MCF 10A (cell line): ENCODE measurements at regions of chr2 and their contacts with region 1.

Region 1: DNA sequence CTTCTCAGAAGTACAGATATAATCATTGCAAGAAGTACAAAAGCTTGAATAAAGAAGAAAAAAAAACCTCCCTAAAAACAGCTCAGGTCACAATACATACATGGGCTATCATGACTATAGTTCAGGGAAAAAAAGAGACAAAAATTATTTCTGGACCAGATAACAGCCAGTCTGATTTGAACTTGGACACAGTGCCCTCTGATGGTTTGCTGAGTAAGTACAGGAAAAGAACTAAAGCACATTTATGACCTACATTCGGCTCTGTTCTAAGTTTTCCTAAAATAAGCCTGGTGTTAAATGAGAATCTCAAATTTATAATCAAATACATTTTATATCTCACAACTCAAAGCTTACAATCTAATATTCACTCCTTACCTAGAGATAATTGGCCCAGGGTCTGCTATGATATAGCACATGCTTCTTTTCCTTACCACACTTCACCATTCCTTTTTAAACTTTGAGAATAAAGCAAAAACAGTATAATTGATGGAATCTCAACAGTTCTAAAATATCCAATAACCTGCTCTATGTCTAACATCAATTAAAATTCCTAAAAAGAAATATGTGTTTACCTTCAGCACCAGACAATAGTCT is 81.1 kb downstream of the RAPH1 start:
- DNase-seq: peak; percentile 60
- H3K4me3 Mint-ChIP-seq: no peak overlapping the region
- H3K27ac Mint-ChIP-seq: no peak overlapping the region
- H3K4me1 Mint-ChIP-seq: peaks cover 14% of the 10 kb centered on the region
- H3K27me3 Mint-ChIP-seq: no peaks in the 10 kb centered on the region
- CTCF ChIP-seq: peak; percentile 62

Region 2: GRCh38 chr2:203225423-203226039 is 228.4 kb before region 1 on chr2:
- CTCF ChIA-PET with region 1: interaction called, 17 read pairs
- POLR2A ChIA-PET with region 1: interaction called, 3 read pairs
- intact Hi-C with region 1: loop called (anchors 1 kb)
- DNase-seq: peak; percentile 41
- H3K4me3 Mint-ChIP-seq: no peak overlapping the region
- H3K27ac Mint-ChIP-seq: no peak overlapping the region
- H3K4me1 Mint-ChIP-seq: no peaks in the 10 kb centered on the region
- H3K27me3 Mint-ChIP-seq: no peaks in the 10 kb centered on the region
- CTCF ChIP-seq: peak; percentile 83

Region 3: DNA sequence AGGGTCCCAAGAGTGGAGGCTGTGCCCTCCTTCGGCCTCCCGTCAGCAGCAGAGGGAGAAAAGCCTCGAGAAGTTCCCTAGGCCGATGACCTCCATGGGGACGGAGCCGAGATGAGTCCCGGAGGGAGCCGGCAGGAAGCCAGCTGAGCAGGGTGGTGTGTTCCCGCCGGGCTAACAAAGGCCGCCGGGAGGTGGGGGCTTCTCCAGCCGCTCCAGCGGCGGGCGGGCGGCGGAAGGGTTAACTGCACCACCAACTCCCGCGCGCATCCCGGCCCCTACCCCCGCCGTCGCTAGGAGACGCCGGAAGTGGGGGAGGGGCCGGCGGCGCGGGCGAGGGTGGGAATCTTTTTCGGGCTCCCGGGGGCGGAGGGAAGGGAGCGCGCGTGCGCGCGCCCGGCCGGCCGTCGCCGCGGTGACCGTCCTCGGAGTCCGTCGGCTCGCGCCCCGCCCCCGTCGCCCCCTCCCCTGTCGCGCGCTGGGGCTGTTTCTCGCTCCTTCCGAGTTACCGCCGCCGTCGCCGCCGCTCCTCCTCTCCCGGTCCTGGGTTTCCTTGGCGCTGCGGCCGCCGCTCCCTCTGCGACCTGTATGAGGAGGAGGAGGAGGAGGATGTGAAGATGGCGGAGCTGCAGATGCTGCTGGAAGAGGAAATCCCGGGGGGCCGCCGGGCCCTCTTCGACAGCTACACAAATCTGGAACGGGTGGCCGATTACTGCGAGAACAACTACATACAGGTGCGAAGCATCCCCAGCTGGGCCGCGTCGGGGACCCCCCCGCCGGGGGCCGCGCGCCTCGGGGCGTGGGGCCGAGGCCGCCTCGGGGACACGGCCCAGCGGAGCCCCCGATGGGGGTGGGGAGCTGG is 125.8 kb before region 1 on chr2 and contains the start of gene ABI2:
- CTCF ChIA-PET with region 1: interaction called, 3 read pairs
- POLR2A ChIA-PET with region 1: no interaction called
- intact Hi-C with region 1: loop called (anchors 5 kb)
- DNase-seq: peak; percentile 73
- H3K4me3 Mint-ChIP-seq: peak within 1 kb of the TSS; percentile 76
- H3K27ac Mint-ChIP-seq: peak within 1 kb of the TSS; percentile 61
- H3K4me1 Mint-ChIP-seq: peaks cover 18% of the 10 kb centered on the region
- H3K27me3 Mint-ChIP-seq: no peaks in the 10 kb centered on the region
- CTCF ChIP-seq: no peak
- total RNA-seq, gene ABI2: 57.3 and 65.6 TPM in 2 replicates

Region 4: GRCh38 chr2:203431391-203432185 is 22.4 kb before region 1 on chr2:
- CTCF ChIA-PET with region 1: interaction called, 10 read pairs
- POLR2A ChIA-PET with region 1: interaction called, 3 read pairs
- intact Hi-C with region 1: no loop called
- DNase-seq: no peak
- H3K4me3 Mint-ChIP-seq: no peak overlapping the region
- H3K27ac Mint-ChIP-seq: no peak overlapping the region
- H3K4me1 Mint-ChIP-seq: no peaks in the 10 kb centered on the region
- H3K27me3 Mint-ChIP-seq: no peaks in the 10 kb centered on the region
- CTCF ChIP-seq: no peak

Region 5: GRCh38 chr2:203469554-203469953 is 15.6 kb after region 1 on chr2:
- CTCF ChIA-PET with region 1: interaction called, 31 read pairs
- POLR2A ChIA-PET with region 1: no interaction called
- intact Hi-C with region 1: no loop called
- DNase-seq: no peak
- H3K4me3 Mint-ChIP-seq: no peak overlapping the region
- H3K27ac Mint-ChIP-seq: no peak overlapping the region
- H3K4me1 Mint-ChIP-seq: no peaks in the 10 kb centered on the region
- H3K27me3 Mint-ChIP-seq: no peaks in the 10 kb centered on the region
- CTCF ChIP-seq: no peak

Region 6: DNA sequence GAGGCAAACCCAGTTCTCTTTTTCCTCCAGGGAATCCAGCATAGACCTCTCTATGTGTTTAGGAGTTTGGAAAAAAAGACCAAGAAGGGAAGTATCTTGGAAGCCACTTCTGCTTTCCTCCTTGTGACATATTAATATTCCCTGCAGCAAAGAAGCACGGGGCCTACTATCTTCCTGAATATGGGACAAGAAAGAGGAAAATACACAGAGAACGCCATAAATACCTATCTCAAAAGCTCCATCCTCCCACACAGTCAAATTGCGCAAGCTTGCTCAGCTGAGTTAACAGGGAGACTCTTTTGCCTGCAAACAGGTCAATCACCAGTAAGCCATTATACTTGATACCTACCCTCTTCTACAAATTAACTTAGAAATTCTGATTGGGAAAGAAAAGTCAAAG is 97.8 kb after region 1 on chr2:
- CTCF ChIA-PET with region 1: no interaction called
- POLR2A ChIA-PET with region 1: no interaction called
- intact Hi-C with region 1: no loop called
- DNase-seq: peak; percentile 71
- H3K4me3 Mint-ChIP-seq: no peak overlapping the region
- H3K27ac Mint-ChIP-seq: no peak overlapping the region
- H3K4me1 Mint-ChIP-seq: no peaks in the 10 kb centered on the region
- H3K27me3 Mint-ChIP-seq: no peaks in the 10 kb centered on the region
- CTCF ChIP-seq: no peak